Endothelial cell of umbilical vein (primary cell): ENCODE measurements at regions of chr9 and their contacts with region 1.

Region 1: GRCh38 chr9:3525836-3526164 is at the start of gene RFX3:
- DNase-seq: peak; percentile 90
- H3K4me3 ChIP-seq: peak within 1 kb of the TSS; percentile 63 to 94 (median 79)
- H3K27ac ChIP-seq: peak within 1 kb of the TSS; percentile 98
- H3K4me1 ChIP-seq: peaks cover 16% of the 10 kb centered on the region
- H3K27me3 ChIP-seq: no peaks in the 10 kb centered on the region
- CTCF ChIP-seq: no peak
- POLR2A ChIP-seq: no peak
- total RNA-seq, gene RFX3: 10.5 and 13.7 TPM in 2 replicates

Region 2: DNA sequence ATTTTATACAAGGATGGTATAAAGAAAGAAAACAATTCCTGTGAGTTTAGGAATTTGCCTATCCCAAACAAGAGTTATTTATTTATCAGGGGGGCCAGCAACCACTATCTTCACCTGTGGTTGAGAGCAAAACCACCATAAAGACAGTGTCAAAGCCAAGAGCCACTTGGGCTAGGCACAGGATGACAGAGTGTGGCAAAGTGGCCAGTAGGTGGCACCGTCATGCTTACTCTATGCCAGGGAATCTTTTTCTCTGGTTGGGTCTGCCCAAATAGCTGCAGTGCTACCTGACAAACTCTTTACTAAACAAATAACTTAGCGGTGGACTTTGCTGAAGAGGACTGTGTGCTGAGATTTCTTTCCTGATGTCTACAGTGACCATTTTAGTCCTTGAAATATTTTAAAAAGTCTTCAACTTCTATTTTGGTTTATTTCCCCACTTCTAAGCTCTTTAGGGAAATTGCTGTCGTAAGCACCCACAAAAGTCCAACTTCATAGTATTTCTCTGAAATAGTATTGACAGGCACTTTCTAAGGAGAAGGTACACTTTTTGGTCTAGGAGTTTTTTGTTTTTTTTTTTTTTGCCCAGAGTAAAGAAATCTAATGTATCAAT is 285.0 kb before region 1 on chr9:
- CTCF ChIA-PET with region 1: interaction called, 13 read pairs
- POLR2A ChIA-PET with region 1: no interaction called
- dilution Hi-C with region 1: no loop called
- intact Hi-C with region 1: no loop called
- DNase-seq: peak; percentile 67
- H3K4me3 ChIP-seq: no peak overlapping the region
- H3K27ac ChIP-seq: no peak overlapping the region
- H3K4me1 ChIP-seq: no peaks in the 10 kb centered on the region
- H3K27me3 ChIP-seq: no peaks in the 10 kb centered on the region
- CTCF ChIP-seq: peak; percentile 77 to 88
- POLR2A ChIP-seq: no peak

Region 3: GRCh38 chr9:3467593-3468219 is 58.1 kb before region 1 on chr9:
- CTCF ChIA-PET with region 1: interaction called, 15 read pairs
- POLR2A ChIA-PET with region 1: no interaction called
- dilution Hi-C with region 1: no loop called
- intact Hi-C with region 1: loop called (anchors 2 kb)
- DNase-seq: peak; percentile 66
- H3K4me3 ChIP-seq: no peak overlapping the region
- H3K27ac ChIP-seq: no peak overlapping the region
- H3K4me1 ChIP-seq: peaks cover 13% of the 10 kb centered on the region
- H3K27me3 ChIP-seq: no peaks in the 10 kb centered on the region
- CTCF ChIP-seq: peak; percentile 94
- POLR2A ChIP-seq: no peak

Region 4: GRCh38 chr9:3478549-3478953 is 47.2 kb before region 1 on chr9:
- CTCF ChIA-PET with region 1: interaction called, 6 read pairs
- POLR2A ChIA-PET with region 1: interaction called, 12 read pairs
- dilution Hi-C with region 1: no loop called
- intact Hi-C with region 1: loop called (anchors 1 kb)
- DNase-seq: peak; percentile 76
- H3K4me3 ChIP-seq: no peak overlapping the region
- H3K27ac ChIP-seq: peak overlapping the region; percentile 83
- H3K4me1 ChIP-seq: peaks cover 58% of the 10 kb centered on the region
- H3K27me3 ChIP-seq: no peaks in the 10 kb centered on the region
- CTCF ChIP-seq: no peak
- POLR2A ChIP-seq: no peak

Region 5: DNA sequence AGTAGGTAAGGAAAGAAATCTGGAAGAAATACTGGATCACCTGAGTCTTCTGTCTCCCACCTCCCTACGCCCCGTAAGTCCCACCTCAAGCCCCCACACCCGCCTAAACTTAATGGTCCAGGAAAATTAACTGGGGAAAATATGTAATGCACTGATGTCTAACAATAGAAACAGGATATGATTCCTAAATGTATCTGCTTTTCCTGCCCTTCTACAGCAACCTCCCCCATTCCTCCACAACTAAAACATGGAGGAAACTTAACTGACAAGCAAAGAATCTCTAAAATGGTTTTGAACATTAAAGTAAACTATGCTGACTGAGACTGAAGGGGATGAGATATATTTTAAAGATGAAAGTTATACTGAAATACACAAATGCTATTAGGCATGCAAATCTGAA is 10.4 kb before region 1 on chr9:
- CTCF ChIA-PET with region 1: interaction called, 6 read pairs
- POLR2A ChIA-PET with region 1: no interaction called
- dilution Hi-C with region 1: no loop called
- intact Hi-C with region 1: loop called (anchors 1 kb)
- DNase-seq: peak; percentile 24
- H3K4me3 ChIP-seq: peak overlapping the region in 1 of 3 experiments; percentile 15
- H3K27ac ChIP-seq: no peak overlapping the region
- H3K4me1 ChIP-seq: peaks cover 14% of the 10 kb centered on the region
- H3K27me3 ChIP-seq: no peaks in the 10 kb centered on the region
- CTCF ChIP-seq: no peak
- POLR2A ChIP-seq: no peak

Region 6: GRCh38 chr9:3608011-3608410 is 82.2 kb after region 1 on chr9:
- CTCF ChIA-PET with region 1: no interaction called
- POLR2A ChIA-PET with region 1: no interaction called
- dilution Hi-C with region 1: no loop called
- intact Hi-C with region 1: no loop called
- DNase-seq: no peak
- H3K4me3 ChIP-seq: no peak overlapping the region
- H3K27ac ChIP-seq: no peak overlapping the region
- H3K4me1 ChIP-seq: no peaks in the 10 kb centered on the region
- H3K27me3 ChIP-seq: no peaks in the 10 kb centered on the region
- CTCF ChIP-seq: no peak
- POLR2A ChIP-seq: no peak

Region 7: GRCh38 chr9:4679268-4680172 is 1153.7 kb after region 1 on chr9 and contains the start of gene CDC37L1:
- CTCF ChIA-PET with region 1: no interaction called
- POLR2A ChIA-PET with region 1: no interaction called
- dilution Hi-C with region 1: no loop called
- intact Hi-C with region 1: loop called (anchors 10 kb)
- DNase-seq: peak; percentile 98
- H3K4me3 ChIP-seq: peak within 1 kb of the TSS; percentile 69 to 84 (median 75)
- H3K27ac ChIP-seq: peak within 1 kb of the TSS; percentile 71
- H3K4me1 ChIP-seq: peaks cover 6% of the 10 kb centered on the region
- H3K27me3 ChIP-seq: no peaks in the 10 kb centered on the region
- CTCF ChIP-seq: peak; percentile 60 to 78
- POLR2A ChIP-seq: peak; percentile 98
- total RNA-seq, gene CDC37L1: 6.8 and 8.9 TPM in 2 replicates